Lower leg skin (tissue), 4 donors: ENCODE measurements at regions of chr7 and their contacts with region 1.

Region 1: DNA sequence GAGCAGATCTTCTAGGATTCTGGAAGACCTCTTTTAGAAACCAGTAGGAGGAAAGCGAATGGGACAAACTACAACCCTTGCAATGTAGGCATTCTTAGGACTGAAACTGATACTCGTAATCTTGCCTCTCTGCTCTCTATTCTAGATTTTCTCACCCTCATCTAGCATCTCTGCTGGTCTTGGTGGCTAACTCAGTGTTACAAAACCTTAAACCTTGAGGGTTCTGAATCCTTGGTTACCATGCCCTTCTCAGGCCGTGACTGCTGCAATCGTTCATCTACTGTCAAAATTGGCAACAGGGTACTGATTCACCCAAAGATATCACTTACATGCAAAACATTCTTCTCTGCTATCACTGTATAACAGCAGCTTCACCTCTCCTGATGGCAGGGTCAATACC is 55.2 kb downstream of the SAMD9 start:
- DNase-seq: no peak
- H3K4me3 ChIP-seq: no peak overlapping the region
- CTCF ChIP-seq: no peak
- POLR2A ChIP-seq: no peak

Region 2: GRCh38 chr7:92598310-92598981 is 464.2 kb before region 1 on chr7:
- intact Hi-C with region 1: loop called (anchors 2 kb)
- DNase-seq: no peak
- H3K4me3 ChIP-seq: no peak overlapping the region
- CTCF ChIP-seq: no peak
- POLR2A ChIP-seq: no peak

Region 3: DNA sequence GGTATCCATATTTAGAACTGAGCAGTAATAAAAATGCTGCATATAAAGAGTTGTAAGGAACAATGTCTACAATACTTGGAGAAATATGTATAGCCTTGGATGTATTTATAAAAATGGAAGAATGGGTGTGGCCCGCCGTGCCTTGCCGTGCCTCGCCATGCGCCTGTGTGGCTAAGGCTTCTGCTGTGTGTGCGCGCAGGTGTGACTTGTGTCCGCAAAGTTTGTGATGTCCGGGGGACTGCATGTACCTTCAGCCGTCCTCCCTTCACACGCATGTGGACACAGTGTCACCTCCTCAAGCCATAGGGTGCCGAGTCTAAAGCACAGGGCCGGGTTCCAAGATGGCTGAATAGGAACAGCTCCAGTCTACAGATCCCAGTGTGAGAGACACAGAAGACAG is 45.4 kb after region 1 on chr7:
- intact Hi-C with region 1: no loop called
- DNase-seq: no peak
- H3K4me3 ChIP-seq: no peak overlapping the region
- CTCF ChIP-seq: no peak
- POLR2A ChIP-seq: no peak

Region 4: DNA sequence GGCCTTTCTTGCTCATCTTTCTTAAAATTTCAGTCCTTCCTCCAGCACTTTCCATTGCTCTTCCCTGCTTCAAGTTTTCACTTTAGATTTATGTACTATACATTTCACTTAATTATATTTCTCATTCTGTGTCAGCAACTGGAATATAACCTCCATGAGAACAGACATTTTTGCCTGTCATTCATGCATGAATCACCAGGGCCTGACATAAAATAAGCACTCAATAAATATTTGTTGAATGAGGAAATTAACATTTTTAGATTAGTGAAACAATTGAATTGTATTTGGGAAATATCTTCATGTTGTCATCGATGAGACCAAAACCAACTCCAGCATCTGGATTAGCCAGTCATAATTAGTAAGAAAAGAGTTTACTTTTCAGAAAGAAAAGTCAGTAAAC is 79.5 kb after region 1 on chr7:
- intact Hi-C with region 1: no loop called
- DNase-seq: no peak
- H3K4me3 ChIP-seq: no peak overlapping the region
- CTCF ChIP-seq: no peak
- POLR2A ChIP-seq: no peak

Region 5: DNA sequence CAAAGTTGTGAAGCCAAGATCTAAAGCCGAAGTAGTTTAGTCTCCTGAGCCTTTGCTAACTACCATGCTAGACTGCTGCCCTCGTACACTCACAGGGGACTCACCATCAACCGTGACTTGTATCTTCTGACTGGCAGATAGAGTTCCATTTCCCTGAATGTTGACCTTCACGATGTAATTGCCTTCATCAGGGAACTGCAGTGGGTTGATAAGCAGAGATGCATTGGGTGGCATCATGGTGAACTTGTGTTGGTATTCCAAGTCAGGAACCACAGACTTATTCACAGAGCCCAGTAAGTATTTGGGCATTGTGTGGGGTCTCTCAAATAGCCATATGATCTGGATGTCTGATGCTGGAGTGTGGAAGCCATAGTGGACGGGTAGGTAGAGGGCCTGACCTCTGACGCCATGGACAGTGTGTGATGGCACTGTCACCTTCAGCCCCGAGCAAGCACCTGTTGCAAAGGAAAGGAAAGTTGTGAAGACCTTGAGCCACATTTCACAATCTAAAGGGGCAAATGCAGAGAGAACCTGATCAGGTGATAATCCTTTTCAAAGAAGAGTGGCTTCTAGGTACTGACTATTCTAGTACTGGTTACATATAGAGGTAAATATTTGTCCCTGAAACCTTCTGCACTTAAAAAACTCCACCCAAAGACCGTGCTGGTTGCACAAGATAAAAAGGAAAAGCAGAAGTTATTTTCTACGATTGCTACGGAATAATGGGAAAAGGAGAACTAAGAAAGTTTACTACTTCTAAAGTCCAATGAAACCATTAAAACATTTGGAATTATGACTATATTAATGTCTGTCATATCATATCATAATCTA is 156.6 kb after region 1 on chr7:
- intact Hi-C with region 1: no loop called
- DNase-seq: no peak
- H3K4me3 ChIP-seq: no peak overlapping the region
- CTCF ChIP-seq: no peak
- POLR2A ChIP-seq: no peak